Sigmoid colon (tissue), 7 donors: ENCODE measurements at regions of chr1 and their contacts with region 1.

Region 1: GRCh38 chr1:89987170-89987819 is 7.6 kb upstream of the ZNF326 start:
- DNase-seq: no peak
- H3K4me3 ChIP-seq: no peak overlapping the region
- H3K27ac ChIP-seq: no peak overlapping the region
- H3K4me1 ChIP-seq: no peaks in the 10 kb centered on the region
- H3K27me3 ChIP-seq: no peaks in the 10 kb centered on the region
- CTCF ChIP-seq: peak; percentile 61 to 83 (median 76)
- EP300 ChIP-seq: no peak
- POLR2A ChIP-seq: no peak

Region 2: GRCh38 chr1:89843281-89844121 is 143.8 kb before region 1 on chr1:
- intact Hi-C with region 1: loop called (anchors 2 kb)
- DNase-seq: peak; percentile 77
- H3K4me3 ChIP-seq: peak overlapping the region; percentile 61 to 80 (median 70)
- H3K27ac ChIP-seq: peak overlapping the region; percentile 71 to 74 (median 71)
- H3K4me1 ChIP-seq: peaks cover 0 to 20% (median 14%) of the 10 kb centered on the region in 4 donors
- H3K27me3 ChIP-seq: no peaks in the 10 kb centered on the region
- CTCF ChIP-seq: peak in 2 of 4 experiments; percentile 30 to 75
- EP300 ChIP-seq: no peak
- POLR2A ChIP-seq: no peak

Region 3: DNA sequence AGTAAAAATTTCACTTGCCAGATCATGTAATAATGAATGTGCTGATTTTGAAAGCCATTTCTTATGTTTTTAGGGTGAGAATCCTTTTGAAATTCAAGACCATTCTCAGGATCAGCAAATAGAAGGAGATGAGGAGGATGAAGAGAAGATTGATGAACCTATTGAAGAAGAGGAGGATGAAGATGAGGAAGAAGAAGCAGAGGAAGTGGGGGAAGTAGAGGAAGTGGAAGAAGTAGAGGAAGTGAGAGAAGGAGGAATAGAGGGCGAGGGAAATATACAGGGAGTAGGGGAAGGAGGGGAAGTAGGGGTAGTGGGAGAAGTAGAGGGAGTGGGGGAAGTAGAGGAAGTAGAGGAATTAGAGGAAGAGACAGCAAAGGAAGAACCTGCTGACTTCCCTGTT is 40.0 kb after region 1 on chr1:
- intact Hi-C with region 1: no loop called
- DNase-seq: no peak
- H3K4me3 ChIP-seq: no peak overlapping the region
- H3K27ac ChIP-seq: no peak overlapping the region
- H3K4me1 ChIP-seq: no peaks in the 10 kb centered on the region
- H3K27me3 ChIP-seq: no peaks in the 10 kb centered on the region
- CTCF ChIP-seq: no peak
- EP300 ChIP-seq: no peak
- POLR2A ChIP-seq: no peak

Region 4: DNA sequence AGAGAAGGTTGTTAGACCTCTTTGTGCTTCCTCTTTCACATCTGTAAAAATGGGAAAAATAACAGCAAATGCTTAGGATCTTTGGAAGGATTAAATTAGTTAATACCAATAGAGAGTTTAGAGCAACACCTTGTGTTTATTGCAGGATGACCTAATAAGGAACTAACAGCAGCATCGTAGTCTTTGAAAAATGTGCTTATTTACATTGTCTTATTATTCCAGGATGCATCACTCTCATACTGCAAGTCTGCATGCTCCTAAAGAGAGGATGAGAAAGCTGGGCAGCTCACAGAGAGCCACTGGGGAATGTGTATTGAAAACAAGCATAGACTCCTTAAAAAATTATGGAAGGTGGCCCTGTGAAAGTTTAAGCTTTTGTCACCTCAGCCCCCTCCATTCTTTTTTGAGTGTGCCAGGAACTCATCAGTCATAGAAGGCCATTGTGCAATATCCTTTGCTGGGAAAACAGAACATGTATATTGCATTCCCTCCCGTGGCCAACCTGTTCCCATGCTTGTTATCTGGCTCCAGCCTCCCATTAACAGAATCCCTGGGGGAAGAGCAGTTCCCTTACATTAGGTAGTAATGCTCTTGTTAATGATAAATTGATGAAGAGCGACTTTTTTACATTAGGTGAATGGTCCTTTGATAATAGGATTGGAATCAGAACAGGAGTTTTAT is 188.3 kb after region 1 on chr1:
- intact Hi-C with region 1: no loop called
- DNase-seq: no peak
- H3K4me3 ChIP-seq: no peak overlapping the region
- H3K27ac ChIP-seq: no peak overlapping the region
- H3K4me1 ChIP-seq: no peaks in the 10 kb centered on the region
- H3K27me3 ChIP-seq: no peaks in the 10 kb centered on the region
- CTCF ChIP-seq: no peak
- EP300 ChIP-seq: no peak
- POLR2A ChIP-seq: no peak

Region 5: GRCh38 chr1:90246069-90246468 is 258.8 kb after region 1 on chr1:
- intact Hi-C with region 1: no loop called
- DNase-seq: no peak
- H3K4me3 ChIP-seq: no peak overlapping the region
- H3K27ac ChIP-seq: no peak overlapping the region
- H3K4me1 ChIP-seq: no peaks in the 10 kb centered on the region
- H3K27me3 ChIP-seq: no peaks in the 10 kb centered on the region
- CTCF ChIP-seq: no peak
- EP300 ChIP-seq: no peak
- POLR2A ChIP-seq: no peak